MCF 10A (cell line): ENCODE measurements at regions of chr6 and their contacts with region 1.

Region 1: DNA sequence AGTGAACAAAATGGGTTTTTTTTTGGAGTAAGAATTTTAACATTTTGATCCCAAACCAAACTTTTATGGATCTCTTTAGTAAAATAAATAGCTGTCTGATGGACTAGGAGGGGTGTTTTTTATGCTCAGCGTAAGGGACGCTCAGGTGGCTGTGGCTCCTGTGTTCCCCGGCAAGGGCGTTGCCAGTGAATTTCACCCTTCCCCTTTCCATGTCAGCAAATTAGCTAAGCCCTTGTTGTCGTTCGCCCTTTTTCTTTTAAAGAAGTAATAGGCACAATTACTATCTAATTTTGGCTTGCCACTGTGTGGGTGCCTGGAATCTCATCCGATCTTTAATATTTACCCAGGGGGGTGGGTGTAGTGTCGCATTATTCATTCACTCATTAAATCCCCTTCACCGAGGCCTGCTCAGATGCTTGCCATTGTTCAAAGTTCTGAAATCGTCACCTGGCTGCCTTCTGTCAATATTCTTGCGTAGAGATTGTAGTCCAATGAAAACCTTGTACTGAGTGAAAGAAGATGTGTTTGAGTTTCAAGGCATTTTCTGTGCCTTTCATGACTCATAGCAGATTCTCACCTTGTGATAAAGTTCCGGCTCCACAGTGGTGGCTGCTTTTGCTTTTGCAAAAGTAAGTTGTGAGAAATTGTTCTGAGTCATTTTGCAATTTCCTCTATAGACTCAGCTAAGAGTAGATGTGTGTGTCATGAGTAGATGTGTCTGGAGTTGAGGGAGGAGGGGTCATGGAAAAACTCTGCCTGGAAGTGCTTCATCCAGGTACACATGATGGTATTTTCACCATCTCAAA is 40.0 kb upstream of the CLDN20 start:
- DNase-seq: peak; percentile 90
- H3K4me3 Mint-ChIP-seq: peak overlapping the region; percentile 26
- H3K27ac Mint-ChIP-seq: peak overlapping the region; percentile 74
- H3K4me1 Mint-ChIP-seq: peaks cover 14% of the 10 kb centered on the region
- H3K27me3 Mint-ChIP-seq: no peaks in the 10 kb centered on the region
- CTCF ChIP-seq: no peak

Region 2: DNA sequence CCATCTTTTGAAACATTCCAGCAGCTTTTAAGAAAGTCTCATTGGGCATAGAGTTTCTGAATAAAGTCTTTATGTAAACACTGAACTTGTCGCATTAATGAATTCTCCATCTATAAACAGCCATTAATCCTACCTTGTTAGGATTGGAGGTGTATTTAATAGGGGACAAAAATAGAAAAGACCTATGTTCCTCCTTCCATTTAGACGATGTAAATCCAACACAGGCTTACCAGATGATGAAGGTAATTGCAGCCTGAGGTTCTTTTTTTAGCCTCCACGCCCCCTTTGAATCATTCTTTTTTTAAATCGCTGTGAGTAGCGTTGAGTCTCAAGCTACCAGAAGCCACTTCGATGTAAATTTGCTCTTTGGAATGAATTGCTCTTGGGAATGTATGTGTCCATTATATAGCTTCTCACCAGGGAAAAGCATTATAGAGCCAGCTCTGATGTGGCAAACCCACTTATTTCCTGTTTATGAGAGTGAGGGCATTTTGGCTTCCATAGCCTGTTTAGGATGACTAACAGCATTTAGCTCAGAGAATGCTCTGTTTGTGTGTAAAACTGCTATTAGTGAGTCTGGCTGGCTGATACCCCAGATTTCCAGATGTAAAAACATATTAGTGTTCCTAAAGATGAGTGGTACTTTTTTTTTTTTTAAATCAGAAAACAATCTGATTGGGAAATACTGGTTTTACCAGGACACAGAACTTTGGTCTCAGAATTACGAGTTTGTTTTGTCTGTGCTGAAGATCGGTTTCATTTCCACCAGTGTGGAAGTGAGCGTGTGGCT is 34.9 kb before region 1 on chr6:
- CTCF ChIA-PET with region 1: no interaction called
- POLR2A ChIA-PET with region 1: interaction called, 10 read pairs
- intact Hi-C with region 1: no loop called
- DNase-seq: peak; percentile 85
- H3K4me3 Mint-ChIP-seq: peak overlapping the region; percentile 37
- H3K27ac Mint-ChIP-seq: peak overlapping the region; percentile 81
- H3K4me1 Mint-ChIP-seq: peaks cover 23% of the 10 kb centered on the region
- H3K27me3 Mint-ChIP-seq: no peaks in the 10 kb centered on the region
- CTCF ChIP-seq: no peak

Region 3: DNA sequence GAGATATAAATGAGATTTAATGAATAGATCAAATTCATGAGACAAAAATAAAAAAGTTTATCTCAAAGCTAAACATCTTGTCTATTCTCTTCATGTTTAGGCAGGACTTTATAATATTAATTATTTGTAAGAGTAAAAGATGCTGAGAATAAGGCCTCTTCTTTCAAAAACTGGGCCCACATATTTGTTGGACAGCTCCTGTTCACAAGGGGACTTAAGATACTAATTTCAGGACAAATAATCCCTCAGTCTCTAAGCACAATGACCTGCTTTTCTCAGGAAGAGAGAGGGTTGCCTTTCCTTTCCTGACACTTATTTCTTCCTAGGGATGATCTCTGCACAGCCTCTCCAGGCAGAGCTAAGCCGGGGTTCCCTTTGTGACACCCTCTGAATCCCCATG is 188.5 kb after region 1 on chr6:
- CTCF ChIA-PET with region 1: no interaction called
- POLR2A ChIA-PET with region 1: no interaction called
- intact Hi-C with region 1: no loop called
- DNase-seq: no peak
- H3K4me3 Mint-ChIP-seq: no peak overlapping the region
- H3K27ac Mint-ChIP-seq: no peak overlapping the region
- H3K4me1 Mint-ChIP-seq: peaks cover 3% of the 10 kb centered on the region
- H3K27me3 Mint-ChIP-seq: no peaks in the 10 kb centered on the region
- CTCF ChIP-seq: no peak